HEK293 (cell line): ENCODE measurements at regions of chr11 and their contacts with region 1.

Region 1: GRCh38 chr11:62573592-62574362 is at the start of gene EEF1G:
- H3K4me3 ChIP-seq: peak within 1 kb of the TSS; percentile 90
- H3K27ac ChIP-seq: peak within 1 kb of the TSS; percentile 99
- H3K4me1 ChIP-seq: no peaks in the 10 kb centered on the region
- CTCF ChIP-seq: no peak

Region 2: DNA sequence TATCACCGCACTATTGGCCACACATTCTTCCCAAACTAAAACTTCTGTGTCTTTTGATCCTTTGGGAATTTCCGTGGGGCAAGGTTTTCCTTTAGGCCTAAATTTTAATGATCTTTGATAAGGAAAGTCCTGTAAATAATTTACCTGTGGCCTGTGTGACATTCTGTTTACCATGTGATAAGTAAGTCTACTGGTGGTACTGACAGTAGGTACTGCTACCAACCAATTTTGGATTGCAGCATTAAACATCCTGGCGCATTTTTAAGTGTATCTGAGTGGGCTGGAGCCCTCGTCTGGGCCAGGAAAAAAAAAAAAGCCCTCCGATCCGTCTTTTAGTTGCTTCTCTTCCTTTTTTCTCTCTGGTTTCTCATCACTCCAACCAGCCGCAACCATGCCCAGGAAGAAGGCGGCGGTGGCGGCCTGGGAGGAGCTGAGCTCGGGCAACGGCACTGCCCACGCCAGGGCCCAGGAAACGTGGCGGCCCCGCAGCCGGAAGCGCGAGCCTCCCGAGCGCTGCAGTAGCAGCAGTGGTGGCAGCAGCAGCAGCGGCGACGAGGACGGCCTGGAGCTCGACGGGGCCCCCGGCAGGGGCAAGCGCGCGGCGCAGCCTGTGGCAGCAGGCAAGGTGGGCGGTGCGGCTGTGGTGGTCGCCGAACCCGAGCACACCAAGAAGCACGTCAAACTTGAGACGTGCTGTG is 202.9 kb before region 1 on chr11:
- CTCF ChIA-PET with region 1: no interaction called
- POLR2A ChIA-PET with region 1: no interaction called
- H3K4me3 ChIP-seq: no peak overlapping the region
- H3K27ac ChIP-seq: no peak overlapping the region
- H3K4me1 ChIP-seq: no peaks in the 10 kb centered on the region
- CTCF ChIP-seq: no peak

Region 3: DNA sequence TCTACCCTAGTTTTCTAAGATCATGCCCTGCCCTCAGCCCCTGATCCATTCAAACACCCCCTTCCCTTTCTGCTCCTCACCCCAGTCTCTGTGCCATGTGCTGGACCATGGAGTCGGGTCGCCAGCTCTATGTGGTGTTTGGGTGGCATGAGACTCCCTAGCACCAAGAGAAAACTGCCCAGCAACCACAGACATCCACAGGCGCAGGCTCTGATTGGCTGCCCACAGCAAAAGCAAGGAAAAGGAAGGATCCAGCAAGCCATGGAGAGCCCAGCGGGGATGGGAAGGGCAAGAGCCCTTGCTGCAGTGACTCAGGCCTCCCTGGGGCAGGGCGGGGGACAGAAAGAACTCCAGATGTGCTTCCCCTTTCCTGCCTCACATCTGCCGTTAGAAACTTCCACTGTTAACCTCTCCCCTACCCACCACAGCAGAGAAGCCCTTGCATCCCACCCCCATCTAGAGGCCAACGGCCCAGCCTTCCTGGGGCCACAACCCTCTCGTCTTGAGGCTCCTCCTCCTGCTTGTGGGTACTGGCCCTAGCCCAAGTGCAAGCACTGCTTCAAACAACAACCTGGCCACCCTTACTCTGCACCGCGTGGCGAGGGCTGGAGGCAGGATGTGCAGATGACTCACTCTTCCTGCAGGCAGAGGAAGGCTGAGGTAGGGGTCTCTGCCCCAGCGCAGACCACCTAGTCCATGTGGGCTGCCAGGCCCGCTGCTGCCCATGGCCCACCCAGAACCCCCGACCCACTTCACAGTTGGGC is 17.5 kb before region 1 on chr11:
- CTCF ChIA-PET with region 1: interaction called, 13 read pairs
- POLR2A ChIA-PET with region 1: interaction called, 18 read pairs
- H3K4me3 ChIP-seq: no peak overlapping the region
- H3K27ac ChIP-seq: peak overlapping the region; percentile 53; the same call in 1 of the 2 replicates
- H3K4me1 ChIP-seq: peaks cover 6% of the 10 kb centered on the region; the same call in 1 of the 2 replicates
- CTCF ChIP-seq: no peak

Region 4: GRCh38 chr11:62601394-62602140 is 27.8 kb after region 1 on chr11 and contains the start of gene MTA2:
- CTCF ChIA-PET with region 1: no interaction called
- POLR2A ChIA-PET with region 1: interaction called, 28 read pairs
- H3K4me3 ChIP-seq: peak within 1 kb of the TSS; percentile 91
- H3K27ac ChIP-seq: peak within 1 kb of the TSS; percentile 95
- H3K4me1 ChIP-seq: no peaks in the 10 kb centered on the region
- CTCF ChIP-seq: no peak

Region 5: DNA sequence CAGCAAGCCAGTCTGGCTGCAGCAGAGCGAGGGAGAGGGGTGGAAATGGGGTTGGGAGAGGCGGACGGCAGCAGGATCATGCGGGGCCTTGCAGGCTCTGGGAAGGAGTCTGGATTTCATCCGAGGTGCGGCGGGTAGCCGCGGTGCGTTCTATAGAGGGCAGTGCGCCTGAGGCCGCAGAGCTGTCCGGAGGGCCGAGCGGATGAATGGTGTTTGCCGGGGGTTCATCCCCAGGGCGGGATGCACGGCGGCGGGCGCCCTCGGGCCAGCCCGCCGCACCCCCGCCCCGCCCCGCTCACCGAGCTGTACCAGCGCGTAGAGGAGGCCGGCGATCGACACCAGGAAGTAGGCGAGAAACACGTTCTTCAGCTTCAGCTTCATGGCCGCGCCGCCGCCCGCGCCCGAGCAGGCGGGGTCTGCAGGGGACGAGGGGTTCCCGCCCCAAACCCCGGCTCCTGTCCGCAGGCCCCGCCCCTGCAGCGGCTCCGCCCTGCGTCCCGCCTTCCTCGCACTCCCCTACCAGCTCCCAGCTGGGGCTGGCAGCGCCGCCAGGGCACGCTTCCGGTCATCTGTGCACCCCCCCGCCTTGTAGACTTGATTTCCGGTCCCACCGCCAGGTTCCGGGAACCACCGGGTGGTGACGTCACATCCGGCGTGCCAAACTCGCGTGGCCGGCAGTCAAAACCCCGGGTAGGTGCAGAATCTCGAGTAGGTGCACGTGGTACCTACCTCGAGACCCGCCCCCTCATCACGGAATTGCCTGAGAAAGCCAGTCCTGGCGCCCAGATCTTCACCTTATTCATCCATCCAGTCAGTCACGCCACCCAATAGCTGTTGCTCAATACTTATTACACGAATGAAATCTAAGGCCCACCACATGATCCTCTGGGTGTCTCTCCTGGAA is 48.0 kb after region 1 on chr11 and contains the start of gene B3GAT3:
- CTCF ChIA-PET with region 1: no interaction called
- POLR2A ChIA-PET with region 1: interaction called, 22 read pairs
- H3K4me3 ChIP-seq: peak within 1 kb of the TSS; percentile 71
- H3K27ac ChIP-seq: peak within 1 kb of the TSS; percentile 80
- H3K4me1 ChIP-seq: no peaks in the 10 kb centered on the region
- CTCF ChIP-seq: peak; percentile 5; the same call in 1 of the 2 replicates

Region 6: DNA sequence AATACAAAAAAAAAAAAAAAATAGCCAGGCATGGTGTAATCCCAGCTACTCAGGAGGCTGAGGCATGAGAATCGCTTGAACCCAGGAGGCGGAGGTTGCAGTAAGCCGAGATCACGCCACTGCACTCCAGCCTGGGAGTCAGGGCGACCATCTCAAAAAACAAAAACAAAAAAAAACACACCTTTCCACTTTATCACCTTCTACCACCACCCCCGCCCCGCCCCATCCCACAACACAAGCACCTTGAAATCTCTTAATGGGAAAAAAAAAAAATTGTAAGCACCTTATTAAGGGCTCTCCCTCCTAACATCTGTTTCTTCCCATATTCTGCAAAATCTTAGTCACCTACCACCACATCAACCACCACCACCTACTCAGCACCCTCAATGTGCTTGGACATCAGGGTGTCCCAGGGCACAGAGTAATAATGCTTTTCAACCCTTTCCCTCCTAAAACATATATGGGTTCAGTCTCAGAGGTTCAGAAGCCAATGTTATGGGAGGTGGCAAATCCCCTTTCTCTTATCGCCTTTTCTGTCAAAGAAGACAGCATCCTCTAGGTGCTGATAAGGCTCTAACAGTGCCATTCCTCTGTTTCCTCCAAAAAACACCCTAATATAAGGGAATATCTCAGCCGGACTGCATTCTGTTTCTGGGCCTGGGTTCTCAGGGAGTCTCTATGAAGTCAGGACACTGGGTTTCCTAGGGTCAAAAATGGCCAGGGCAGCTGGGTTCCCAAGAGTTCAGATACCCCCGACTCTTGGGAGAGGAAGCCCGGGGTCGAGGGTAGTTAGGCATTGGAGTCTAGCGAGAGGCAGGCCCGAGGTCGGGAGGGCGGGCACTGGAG is 78.6 kb after region 1 on chr11:
- CTCF ChIA-PET with region 1: interaction called, 3 read pairs
- POLR2A ChIA-PET with region 1: interaction called, 10 read pairs
- H3K4me3 ChIP-seq: peak overlapping the region; percentile 99
- H3K27ac ChIP-seq: peak overlapping the region; percentile 70
- H3K4me1 ChIP-seq: no peaks in the 10 kb centered on the region
- CTCF ChIP-seq: no peak

Region 7: DNA sequence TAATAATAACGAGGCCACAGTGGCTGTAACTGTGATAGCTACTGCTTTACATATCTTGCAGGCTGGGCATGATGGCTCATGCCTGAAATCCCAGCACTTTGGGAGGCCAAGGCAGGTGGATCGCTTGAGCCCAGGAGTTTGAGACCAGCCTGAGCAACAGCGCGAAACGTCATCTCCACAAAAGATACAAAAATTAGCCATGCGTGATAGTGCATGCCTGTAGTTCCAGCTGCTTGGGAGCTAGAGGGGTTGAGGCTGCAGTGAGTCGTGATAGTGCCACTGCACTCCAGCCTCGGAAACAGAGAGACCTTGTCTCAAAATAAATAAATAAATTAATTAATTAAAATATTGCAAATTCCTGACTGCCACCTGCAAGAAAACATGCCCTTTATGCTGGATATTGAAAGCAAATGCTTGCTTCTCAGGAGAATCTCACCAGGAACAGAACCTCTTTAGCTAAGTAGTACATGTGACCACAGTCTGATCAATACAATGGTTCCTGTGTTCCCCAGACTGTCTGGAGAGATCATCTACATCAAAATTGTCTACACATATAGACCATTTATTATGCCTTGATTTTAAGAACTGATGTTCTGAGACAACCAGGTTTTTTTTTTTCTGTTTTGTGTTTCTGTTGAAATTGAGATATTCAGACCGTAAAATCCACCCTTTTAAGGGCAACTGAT is 173.8 kb after region 1 on chr11:
- CTCF ChIA-PET with region 1: no interaction called
- POLR2A ChIA-PET with region 1: no interaction called
- H3K4me3 ChIP-seq: no peak overlapping the region
- H3K27ac ChIP-seq: no peak overlapping the region
- H3K4me1 ChIP-seq: no peaks in the 10 kb centered on the region
- CTCF ChIP-seq: no peak